OCI-LY7 (cell line): ENCODE measurements at regions of chr19 and their contacts with region 1.

Region 1: DNA sequence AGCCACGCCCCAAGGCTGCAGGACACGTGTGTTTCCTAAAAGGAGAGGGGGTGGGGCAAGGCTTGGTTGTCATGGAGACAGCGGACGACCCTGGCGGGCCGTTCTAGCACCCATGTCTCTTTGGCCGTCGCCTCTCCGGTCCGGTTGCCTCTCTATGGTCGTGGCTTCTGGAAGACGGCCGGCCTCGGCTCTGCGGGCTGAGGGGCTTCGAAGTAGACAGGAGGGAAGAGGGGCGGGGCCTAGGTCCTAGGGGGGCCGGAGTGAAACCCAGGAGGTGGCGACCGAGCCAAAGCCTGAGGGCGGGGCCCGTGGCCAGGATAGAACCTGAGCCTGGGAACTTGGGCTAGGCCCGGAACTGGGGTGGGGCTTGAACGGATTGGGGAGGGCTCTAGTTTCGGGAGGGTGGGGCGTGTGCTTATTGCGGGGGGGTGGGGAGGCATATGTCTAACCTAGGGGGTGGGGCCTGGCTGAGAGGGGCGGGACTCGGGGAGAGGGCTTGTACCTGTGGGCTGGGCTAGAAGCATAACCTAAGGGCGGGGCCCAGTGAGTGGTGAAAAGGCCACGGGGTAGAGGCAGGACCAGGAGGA is 750 bp upstream of the SLC27A1 start:
- DNase-seq: peak; percentile 92
- H3K4me3 ChIP-seq: peak overlapping the region; percentile 70
- H3K27ac ChIP-seq: no peak overlapping the region
- H3K4me1 ChIP-seq: peaks cover 30% of the 10 kb centered on the region
- CTCF ChIP-seq: no peak

Region 2: GRCh38 chr19:17346109-17346671 is 123.4 kb before region 1 on chr19:
- CTCF ChIA-PET with region 1: interaction called, 3 read pairs
- POLR2A ChIA-PET with region 1: no interaction called
- intact Hi-C with region 1: loop called (anchors 2 kb)
- DNase-seq: peak; percentile 75
- H3K4me3 ChIP-seq: no peak overlapping the region
- H3K27ac ChIP-seq: no peak overlapping the region
- H3K4me1 ChIP-seq: peaks cover 25% of the 10 kb centered on the region
- CTCF ChIP-seq: peak; percentile 88

Region 3: DNA sequence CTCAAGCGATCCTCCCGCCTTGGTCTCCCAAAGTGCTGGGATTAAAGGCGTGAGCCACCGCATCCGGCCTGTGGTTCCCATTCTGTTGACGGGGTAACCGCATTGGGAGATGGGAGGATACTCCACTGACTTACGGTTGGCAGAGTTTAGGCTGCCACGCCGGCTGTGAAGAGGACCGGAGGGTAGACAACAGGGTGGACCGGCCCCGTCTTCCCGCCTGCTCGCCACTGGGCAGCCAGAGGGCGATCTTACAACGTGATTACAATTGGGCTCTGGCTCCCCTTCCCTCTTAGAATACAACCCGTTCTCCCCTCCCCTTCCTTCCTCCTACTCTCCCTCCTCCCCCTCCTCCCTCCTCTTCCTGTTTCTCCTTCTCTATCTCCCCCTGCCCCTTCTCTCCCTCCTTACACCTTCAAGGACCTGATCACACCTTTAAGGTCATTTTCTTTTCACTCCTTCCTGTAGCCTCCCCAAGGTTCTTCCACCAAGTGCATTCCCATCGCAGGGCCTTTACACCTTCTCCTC is 74.6 kb before region 1 on chr19:
- CTCF ChIA-PET with region 1: no interaction called
- POLR2A ChIA-PET with region 1: no interaction called
- intact Hi-C with region 1: loop called (anchors 1 kb)
- DNase-seq: peak; percentile 66
- H3K4me3 ChIP-seq: no peak overlapping the region
- H3K27ac ChIP-seq: peak overlapping the region; percentile 25
- H3K4me1 ChIP-seq: peaks cover 20% of the 10 kb centered on the region
- CTCF ChIP-seq: peak; percentile 78

Region 4: DNA sequence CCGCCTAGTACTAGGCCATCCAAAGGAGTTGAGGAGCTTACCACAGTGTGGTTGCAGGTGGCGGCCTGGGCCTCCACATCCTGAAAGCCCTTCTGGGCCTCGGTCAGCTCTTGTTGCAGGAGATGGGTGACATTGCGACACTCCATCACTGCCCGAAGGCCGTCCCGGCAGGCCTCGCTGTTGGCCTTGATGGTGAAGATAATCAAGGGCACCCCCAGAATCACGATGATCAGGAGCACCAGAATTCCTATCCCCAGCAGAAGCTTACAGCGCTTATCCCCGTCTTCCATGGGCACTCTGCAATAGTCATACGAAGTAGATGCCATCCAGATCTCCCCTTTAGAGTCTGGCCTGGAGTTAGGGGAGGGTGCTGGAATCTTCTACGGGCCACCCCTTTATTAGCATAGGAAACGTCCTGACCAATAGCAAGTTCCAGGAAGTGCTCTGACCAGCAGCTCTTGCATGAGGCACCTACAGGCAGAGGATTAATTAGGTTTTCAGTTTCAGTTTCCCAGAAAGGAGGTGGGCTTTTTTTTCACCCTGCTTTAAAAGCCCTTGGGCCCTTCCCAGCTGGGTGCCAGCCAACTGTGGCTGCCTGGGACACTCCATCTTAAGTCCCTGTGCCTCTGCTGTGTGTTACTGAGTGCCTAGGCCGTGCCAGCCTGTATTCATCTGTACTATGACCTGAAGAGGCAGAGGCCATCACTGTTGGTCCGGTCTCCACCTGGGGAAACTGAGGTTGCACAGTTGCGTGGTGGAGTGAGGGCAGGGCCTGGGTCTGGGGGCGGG is 64.1 kb before region 1 on chr19 and contains the start of gene BST2:
- CTCF ChIA-PET with region 1: no interaction called
- POLR2A ChIA-PET with region 1: interaction called, 3 read pairs
- intact Hi-C with region 1: loop called (anchors 5 kb)
- DNase-seq: peak; percentile 95
- H3K4me3 ChIP-seq: peak within 1 kb of the TSS; percentile 90
- H3K27ac ChIP-seq: peak within 1 kb of the TSS; percentile 93
- H3K4me1 ChIP-seq: peaks cover 31% of the 10 kb centered on the region
- CTCF ChIP-seq: no peak
- total RNA-seq, gene BST2: 101 and 134 TPM in 2 replicates

Region 5: DNA sequence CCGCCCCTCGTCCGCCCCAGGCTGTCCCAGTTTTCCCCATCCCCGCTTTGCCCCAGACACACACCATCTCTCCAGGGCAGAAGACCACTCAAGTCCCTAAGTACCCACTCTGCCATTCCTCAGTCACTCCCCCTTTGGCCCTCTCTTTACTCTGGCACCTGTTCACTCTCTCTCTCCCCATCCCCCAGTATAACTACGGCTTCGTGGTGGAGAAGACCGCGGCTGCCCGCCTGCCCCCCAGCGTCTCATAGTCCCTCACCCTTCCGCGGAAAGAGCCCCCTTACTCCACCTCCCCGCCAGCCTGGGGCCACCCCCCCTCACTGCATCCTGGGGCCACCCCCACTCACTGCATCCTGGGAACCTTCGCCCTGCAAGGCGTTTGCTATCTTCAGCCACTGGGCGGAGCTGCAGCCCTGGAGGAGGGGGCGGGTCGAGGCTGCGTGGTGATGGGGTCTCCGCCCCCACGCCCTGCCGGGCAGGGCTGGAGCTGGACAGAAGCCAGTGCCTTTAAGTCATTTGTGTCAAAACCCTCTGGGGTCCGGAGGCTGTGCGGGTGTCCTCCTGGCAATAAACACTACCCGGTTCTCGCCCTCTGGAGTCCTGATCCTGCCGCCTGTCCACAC is 44.7 kb before region 1 on chr19:
- CTCF ChIA-PET with region 1: no interaction called
- POLR2A ChIA-PET with region 1: interaction called, 4 read pairs
- intact Hi-C with region 1: loop called (anchors 2 kb)
- DNase-seq: peak; percentile 71
- H3K4me3 ChIP-seq: peak overlapping the region; percentile 42
- H3K27ac ChIP-seq: no peak overlapping the region
- H3K4me1 ChIP-seq: peaks cover 34% of the 10 kb centered on the region
- CTCF ChIP-seq: peak; percentile 78

Region 6: GRCh38 chr19:17448131-17448967 is 21.2 kb before region 1 on chr19 and contains the start of gene TMEM221:
- CTCF ChIA-PET with region 1: no interaction called
- POLR2A ChIA-PET with region 1: no interaction called
- intact Hi-C with region 1: loop called (anchors 1 kb)
- DNase-seq: peak; percentile 18
- H3K4me3 ChIP-seq: no peak within 1 kb of the TSS
- H3K27ac ChIP-seq: no peak within 1 kb of the TSS
- H3K4me1 ChIP-seq: peaks cover 11% of the 10 kb centered on the region
- CTCF ChIP-seq: peak; percentile 70
- total RNA-seq, gene TMEM221: not detected in 2 replicates